ENCODE measurements at regions of chr20 and their contacts with region 1.

Region 1: DNA sequence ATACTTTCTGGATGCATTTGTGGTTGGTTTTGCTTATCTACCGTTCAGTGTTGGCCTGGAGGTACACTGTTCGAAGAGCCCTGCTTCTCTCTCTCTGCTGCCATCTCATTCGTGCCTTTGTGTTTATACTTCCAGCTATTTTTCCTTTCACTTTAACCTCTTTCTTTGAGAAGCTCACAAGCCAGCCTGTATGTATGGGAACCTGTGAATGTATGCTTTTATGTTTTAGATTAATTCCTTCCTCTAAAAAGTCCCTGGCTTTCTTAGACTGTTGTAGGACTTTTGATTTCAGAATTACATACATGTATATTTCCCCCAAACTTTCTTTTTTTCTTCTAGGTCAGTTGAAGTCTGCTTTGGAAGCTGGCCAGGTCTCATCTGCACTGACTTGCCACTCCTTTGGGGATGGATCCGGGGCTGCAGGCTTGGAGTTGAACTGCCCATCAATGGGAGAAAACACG is 83.0 kb downstream of the SCAND1 start:
- DNase-seq: peak; percentile 79
- H3K4me3 ChIP-seq: peak overlapping the region in 1 of 3 experiments; percentile 42
- H3K27ac ChIP-seq: peak overlapping the region; percentile 62
- H3K4me1 ChIP-seq: peaks cover 25% of the 10 kb centered on the region
- H3K27me3 ChIP-seq: no peaks in the 10 kb centered on the region
- CTCF ChIP-seq: no peak
- POLR2A ChIP-seq: no peak

Region 2: DNA sequence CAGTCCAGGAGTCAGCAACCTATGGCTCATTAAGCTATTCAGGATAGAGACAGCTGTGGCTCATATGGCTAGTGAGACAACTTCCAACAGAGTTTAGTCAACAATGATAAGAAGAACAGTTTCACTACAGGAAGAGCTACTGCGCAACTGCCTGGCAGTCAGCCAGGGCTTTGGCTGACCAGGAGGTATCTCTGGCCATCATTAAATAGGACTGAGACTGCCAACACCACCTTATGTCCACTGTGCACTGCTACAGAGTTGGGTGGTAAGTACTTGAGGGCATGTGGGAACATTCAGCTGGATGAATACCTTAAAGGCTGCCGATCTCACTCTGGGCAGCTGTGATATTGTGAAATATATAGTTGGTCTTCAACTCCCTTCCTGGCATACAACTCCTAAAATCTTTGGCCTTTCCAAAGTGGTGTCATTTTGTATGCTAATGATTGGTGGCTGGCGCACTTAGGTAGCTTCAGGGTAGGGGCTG is 526.9 kb before region 1 on chr20:
- CTCF ChIA-PET with region 1: no interaction called
- POLR2A ChIA-PET with region 1: interaction called, 10 read pairs
- dilution Hi-C with region 1: no loop called
- intact Hi-C with region 1: no loop called
- DNase-seq: peak; percentile 88
- H3K4me3 ChIP-seq: no peak overlapping the region
- H3K27ac ChIP-seq: no peak overlapping the region
- H3K4me1 ChIP-seq: peaks cover 10% of the 10 kb centered on the region
- H3K27me3 ChIP-seq: no peaks in the 10 kb centered on the region
- CTCF ChIP-seq: no peak
- POLR2A ChIP-seq: no peak

Region 3: DNA sequence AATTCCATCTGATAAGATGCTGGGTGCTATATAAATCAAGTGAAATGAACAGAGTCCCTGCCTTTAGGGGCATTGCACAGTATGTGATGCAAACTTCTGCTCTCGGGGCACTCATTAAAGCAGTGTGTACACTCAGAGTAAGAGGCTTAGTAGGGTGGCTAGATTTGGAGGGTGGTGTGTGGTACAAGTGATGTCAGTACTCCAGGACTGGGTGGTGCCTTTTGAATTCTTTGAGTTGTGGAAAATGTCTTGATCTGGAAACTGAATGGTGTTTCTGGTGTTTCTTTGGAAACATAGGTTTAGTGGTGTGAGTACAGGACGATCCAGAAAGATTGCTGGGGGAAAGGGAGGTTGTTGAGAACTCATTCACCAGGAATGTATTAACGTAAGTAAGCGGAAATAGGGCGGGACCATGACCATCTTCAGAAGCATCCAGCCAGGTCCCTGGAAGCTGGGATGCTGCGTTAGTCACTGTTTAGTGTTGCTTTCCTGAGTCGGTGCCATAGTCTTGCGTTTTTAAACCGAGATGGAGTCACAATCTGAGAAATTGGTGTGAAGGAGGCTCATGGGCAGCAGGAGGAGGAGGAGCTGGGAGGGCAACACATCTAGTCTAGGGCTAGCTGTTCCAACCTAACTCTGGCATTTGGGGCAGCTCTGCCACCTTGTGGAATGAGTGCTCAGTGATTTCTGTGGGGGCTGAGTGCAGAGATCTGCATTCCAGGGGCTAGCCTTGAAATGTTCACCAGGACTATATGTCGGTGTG is 12.6 kb after region 1 on chr20:
- CTCF ChIA-PET with region 1: interaction called, 26 read pairs
- POLR2A ChIA-PET with region 1: interaction called, 3 read pairs
- dilution Hi-C with region 1: no loop called
- intact Hi-C with region 1: loop called (anchors 1 kb)
- DNase-seq: peak; percentile 88
- H3K4me3 ChIP-seq: peak overlapping the region in 1 of 3 experiments; percentile 1
- H3K27ac ChIP-seq: peak overlapping the region; percentile 95
- H3K4me1 ChIP-seq: peaks cover 13% of the 10 kb centered on the region
- H3K27me3 ChIP-seq: no peaks in the 10 kb centered on the region
- CTCF ChIP-seq: peak; percentile 72 to 77
- POLR2A ChIP-seq: peak; percentile 52

Region 4: GRCh38 chr20:35934050-35934449 is 62.7 kb after region 1 on chr20:
- CTCF ChIA-PET with region 1: no interaction called
- POLR2A ChIA-PET with region 1: no interaction called
- dilution Hi-C with region 1: no loop called
- intact Hi-C with region 1: no loop called
- DNase-seq: no peak
- H3K4me3 ChIP-seq: no peak overlapping the region
- H3K27ac ChIP-seq: no peak overlapping the region
- H3K4me1 ChIP-seq: no peaks in the 10 kb centered on the region
- H3K27me3 ChIP-seq: no peaks in the 10 kb centered on the region
- CTCF ChIP-seq: no peak
- POLR2A ChIP-seq: no peak

Region 5: GRCh38 chr20:35981969-35982368 is 110.6 kb after region 1 on chr20:
- CTCF ChIA-PET with region 1: no interaction called
- POLR2A ChIA-PET with region 1: no interaction called
- dilution Hi-C with region 1: no loop called
- intact Hi-C with region 1: no loop called
- DNase-seq: no peak
- H3K4me3 ChIP-seq: no peak overlapping the region
- H3K27ac ChIP-seq: no peak overlapping the region
- H3K4me1 ChIP-seq: no peaks in the 10 kb centered on the region
- H3K27me3 ChIP-seq: peaks cover 2 to 8% of the 10 kb centered on the region in 2 experiments
- CTCF ChIP-seq: no peak
- POLR2A ChIP-seq: no peak